Ovary (tissue), 10 donors: ENCODE measurements at regions of chrX and their contacts with region 1.

Region 1: GRCh38 chrX:129900054-129900453 is 5.9 kb upstream of the UTP14A start:
- DNase-seq: no peak
- H3K4me3 ChIP-seq: no peak overlapping the region
- H3K27ac ChIP-seq: no peak overlapping the region
- H3K4me1 ChIP-seq: no peaks in the 10 kb centered on the region
- H3K27me3 ChIP-seq: no peaks in the 10 kb centered on the region
- CTCF ChIP-seq: no peak
- EP300 ChIP-seq: no peak
- POLR2A ChIP-seq: no peak

Region 2: DNA sequence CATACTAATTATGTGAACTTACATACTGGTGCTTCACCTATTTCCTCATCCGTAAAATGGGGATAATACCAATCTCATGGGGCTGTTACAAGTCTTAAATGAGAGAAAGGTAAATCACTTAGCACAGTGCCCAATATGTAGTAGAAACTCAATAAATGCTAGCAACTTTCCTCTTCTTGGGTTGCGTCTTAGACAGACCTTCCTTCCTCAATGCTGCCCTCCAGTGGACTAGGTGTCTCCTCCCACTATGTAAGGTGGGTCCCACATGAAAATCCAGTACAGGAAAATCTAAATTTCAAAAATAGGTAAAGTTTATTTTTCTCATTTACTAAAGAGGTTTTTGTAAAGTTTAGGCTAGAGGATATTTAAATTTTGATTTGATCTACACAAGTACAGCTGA is 76.9 kb before region 1 on chrX:
- intact Hi-C with region 1: no loop called
- DNase-seq: peak in 3 of 5 donors; percentile 12 to 49 (median 29)
- H3K4me3 ChIP-seq: no peak overlapping the region
- H3K27ac ChIP-seq: no peak overlapping the region
- H3K4me1 ChIP-seq: no peaks in the 10 kb centered on the region
- H3K27me3 ChIP-seq: no peaks in the 10 kb centered on the region
- CTCF ChIP-seq: no peak
- EP300 ChIP-seq: no peak
- POLR2A ChIP-seq: no peak

Region 3: GRCh38 chrX:130810561-130810960 is 910.5 kb after region 1 on chrX:
- intact Hi-C with region 1: loop called in 1 of 4 experiments (anchors 5 kb)
- DNase-seq: no peak
- H3K4me3 ChIP-seq: no peak overlapping the region
- H3K27ac ChIP-seq: no peak overlapping the region
- H3K4me1 ChIP-seq: no peaks in the 10 kb centered on the region
- H3K27me3 ChIP-seq: no peaks in the 10 kb centered on the region
- CTCF ChIP-seq: no peak
- EP300 ChIP-seq: no peak
- POLR2A ChIP-seq: no peak

Region 4: DNA sequence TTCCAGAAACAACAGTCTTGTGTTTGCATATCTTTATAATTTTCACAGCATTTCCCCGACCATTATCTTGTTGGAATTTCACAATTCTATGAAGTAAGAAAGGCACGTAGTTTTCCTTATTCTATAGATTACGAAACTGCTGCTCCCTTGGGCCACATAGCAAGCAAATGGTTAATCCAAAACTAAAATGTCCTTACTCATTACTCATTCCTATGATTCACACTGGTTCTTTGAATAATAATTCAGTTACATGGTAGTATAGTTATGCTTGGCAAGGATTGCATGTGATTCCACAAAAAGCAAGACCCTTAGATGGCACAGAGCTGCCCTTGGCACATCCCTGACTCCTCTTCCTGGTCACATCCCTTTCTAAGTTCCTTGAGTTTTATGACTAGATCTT is 1695.1 kb after region 1 on chrX:
- intact Hi-C with region 1: no loop called
- DNase-seq: no peak
- H3K4me3 ChIP-seq: no peak overlapping the region
- H3K27ac ChIP-seq: no peak overlapping the region
- H3K4me1 ChIP-seq: no peaks in the 10 kb centered on the region
- H3K27me3 ChIP-seq: no peaks in the 10 kb centered on the region
- CTCF ChIP-seq: no peak
- EP300 ChIP-seq: no peak
- POLR2A ChIP-seq: no peak